ENCODE measurements at regions of chr12 and their contacts with region 1.

Region 1: GRCh38 chr12:21169878-21170472 is 39.0 kb downstream of the SLCO1B1 start:
- DNase-seq: peak; percentile 8
- H3K4me3 ChIP-seq: no peak overlapping the region
- H3K27ac ChIP-seq: no peak overlapping the region
- H3K4me1 ChIP-seq: no peaks in the 10 kb centered on the region
- H3K27me3 ChIP-seq: no peaks in the 10 kb centered on the region
- CTCF ChIP-seq: peak; percentile 80 to 81

Region 2: GRCh38 chr12:20463913-20464524 is 706.0 kb before region 1 on chr12:
- CTCF ChIA-PET with region 1: no interaction called
- dilution Hi-C with region 1: no loop called
- in situ Hi-C with region 1: no loop called
- intact Hi-C with region 1: loop called (anchors 10 kb)
- DNase-seq: no peak
- H3K4me3 ChIP-seq: no peak overlapping the region
- H3K27ac ChIP-seq: no peak overlapping the region
- H3K4me1 ChIP-seq: no peaks in the 10 kb centered on the region
- H3K27me3 ChIP-seq: no peaks in the 10 kb centered on the region
- CTCF ChIP-seq: peak; percentile 50 to 61

Region 3: DNA sequence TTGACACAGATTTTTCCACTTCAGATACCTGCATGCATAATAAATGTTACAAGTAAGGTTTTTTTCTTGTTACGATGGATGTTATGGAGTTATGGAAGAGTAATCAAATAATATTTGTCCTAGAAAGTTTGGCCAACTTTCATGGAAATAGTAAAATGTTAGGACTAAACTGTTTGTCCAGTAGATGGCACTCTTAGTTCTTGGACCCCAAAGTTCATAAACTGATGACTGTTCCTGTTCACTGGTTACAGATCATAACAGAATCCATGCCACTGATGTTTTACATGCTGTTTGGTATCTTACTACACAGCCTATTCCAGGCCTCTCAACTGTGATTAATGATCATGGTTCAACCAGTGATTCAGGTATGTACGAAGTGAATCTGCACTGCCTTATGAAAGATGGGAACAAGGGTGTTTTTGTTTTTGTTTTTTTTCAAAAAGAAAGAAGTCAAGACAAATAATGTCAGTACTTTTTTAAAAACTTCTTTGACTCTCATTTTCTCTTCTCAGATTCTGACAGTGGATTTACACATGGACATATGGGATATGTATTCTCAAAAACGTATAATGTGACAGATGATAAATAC is 523.6 kb before region 1 on chr12:
- CTCF ChIA-PET with region 1: no interaction called
- dilution Hi-C with region 1: no loop called
- in situ Hi-C with region 1: loop called in 1 of 2 experiments (anchors 10 kb)
- intact Hi-C with region 1: loop called (anchors 1 kb)
- DNase-seq: peak; percentile 16
- H3K4me3 ChIP-seq: no peak overlapping the region
- H3K27ac ChIP-seq: no peak overlapping the region
- H3K4me1 ChIP-seq: no peaks in the 10 kb centered on the region
- H3K27me3 ChIP-seq: no peaks in the 10 kb centered on the region
- CTCF ChIP-seq: peak; percentile 48 to 54

Region 4: DNA sequence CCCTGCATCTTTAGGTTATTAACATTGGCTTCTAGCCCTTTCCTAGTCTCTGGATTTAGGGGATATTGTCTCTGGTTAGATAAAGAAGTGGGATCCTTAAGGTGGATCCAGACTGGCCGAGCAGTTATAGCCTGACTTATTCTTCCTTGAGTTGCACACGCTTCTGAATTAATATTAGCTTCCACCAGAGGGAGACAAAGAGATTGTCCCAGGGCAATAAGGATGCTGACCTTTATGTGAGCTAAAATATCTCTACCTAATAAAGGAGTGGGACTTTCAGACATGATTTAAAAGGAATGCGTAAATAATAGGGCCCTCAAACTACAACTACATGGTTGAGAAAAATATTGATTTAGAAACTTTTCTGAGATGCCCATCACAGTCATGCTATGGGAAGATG is 219.7 kb before region 1 on chr12:
- CTCF ChIA-PET with region 1: no interaction called
- dilution Hi-C with region 1: no loop called
- in situ Hi-C with region 1: no loop called
- intact Hi-C with region 1: loop called (anchors 5 kb)
- DNase-seq: peak; percentile 9
- H3K4me3 ChIP-seq: no peak overlapping the region
- H3K27ac ChIP-seq: no peak overlapping the region
- H3K4me1 ChIP-seq: no peaks in the 10 kb centered on the region
- H3K27me3 ChIP-seq: no peaks in the 10 kb centered on the region
- CTCF ChIP-seq: peak; percentile 29 to 42

Measured in mammary epithelial cell (primary cell).